Kidney (tissue), 22 donors: ENCODE measurements at regions of chr10 and their contacts with region 1.

Region 1: GRCh38 chr10:117174439-117175214 is 22.7 kb upstream of the KCNK18 start:
- DNase-seq: peak; percentile 73 to 94 (median 90)
- H3K4me3 ChIP-seq: peak overlapping the region in 2 of 3 donors; percentile 48 to 70
- H3K27ac ChIP-seq: no peak overlapping the region
- H3K4me1 ChIP-seq: peaks cover 0 to 9% (median 4%) of the 10 kb centered on the region in 3 donors
- H3K27me3 ChIP-seq: peaks cover 31% of the 10 kb centered on the region
- CTCF ChIP-seq: peak; percentile 85

Region 2: GRCh38 chr10:116796910-116797513 is 377.6 kb before region 1 on chr10:
- intact Hi-C with region 1: loop called (anchors 5 kb)
- DNase-seq: peak; percentile 82 to 91 (median 84)
- H3K4me3 ChIP-seq: no peak overlapping the region
- H3K27ac ChIP-seq: no peak overlapping the region
- H3K4me1 ChIP-seq: no peaks in the 10 kb centered on the region
- H3K27me3 ChIP-seq: no peaks in the 10 kb centered on the region
- CTCF ChIP-seq: peak; percentile 90

Region 3: GRCh38 chr10:117461766-117462423 is 287.3 kb after region 1 on chr10:
- intact Hi-C with region 1: no loop called
- DNase-seq: peak; percentile 70 to 91 (median 87)
- H3K4me3 ChIP-seq: no peak overlapping the region
- H3K27ac ChIP-seq: no peak overlapping the region
- H3K4me1 ChIP-seq: no peaks in the 10 kb centered on the region
- H3K27me3 ChIP-seq: no peaks in the 10 kb centered on the region
- CTCF ChIP-seq: no peak